ENCODE measurements at regions of chr12 and their contacts with region 1.

Region 1: DNA sequence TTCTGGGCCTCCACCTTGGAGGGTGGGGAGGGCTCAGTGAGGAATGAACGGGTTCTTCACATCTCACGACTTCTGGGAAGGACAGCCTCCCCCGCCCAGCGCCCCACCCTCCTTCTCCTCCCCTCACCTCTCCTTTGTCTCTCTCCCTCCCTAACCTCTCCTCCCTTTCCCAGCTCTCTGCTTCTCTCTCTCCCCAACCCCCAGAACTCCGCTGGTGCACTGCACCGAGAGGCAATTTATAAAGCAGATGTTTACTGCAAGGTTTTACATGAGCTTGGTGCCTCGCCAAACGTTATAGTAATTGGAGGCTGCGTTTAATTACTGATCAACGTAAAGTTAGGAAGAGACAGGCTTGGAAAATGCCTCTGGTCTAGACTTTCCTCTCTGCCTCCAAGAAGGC is 42.9 kb upstream of the FAM222A start:
- DNase-seq: no peak
- H3K4me3 ChIP-seq: no peak overlapping the region
- H3K27ac ChIP-seq: no peak overlapping the region
- H3K4me1 ChIP-seq: no peaks in the 10 kb centered on the region
- H3K27me3 ChIP-seq: no peaks in the 10 kb centered on the region
- CTCF ChIP-seq: no peak
- POLR2A ChIP-seq: no peak

Region 2: GRCh38 chr12:109637348-109637747 is 33.4 kb before region 1 on chr12:
- intact Hi-C with region 1: loop called (anchors 1 kb)
- DNase-seq: no peak
- H3K4me3 ChIP-seq: no peak overlapping the region
- H3K27ac ChIP-seq: no peak overlapping the region
- H3K4me1 ChIP-seq: no peaks in the 10 kb centered on the region
- H3K27me3 ChIP-seq: no peaks in the 10 kb centered on the region
- CTCF ChIP-seq: no peak
- POLR2A ChIP-seq: no peak

Region 3: GRCh38 chr12:109653890-109654289 is 16.8 kb before region 1 on chr12:
- intact Hi-C with region 1: loop called (anchors 1 kb)
- DNase-seq: no peak
- H3K4me3 ChIP-seq: no peak overlapping the region
- H3K27ac ChIP-seq: no peak overlapping the region
- H3K4me1 ChIP-seq: no peaks in the 10 kb centered on the region
- H3K27me3 ChIP-seq: no peaks in the 10 kb centered on the region
- CTCF ChIP-seq: no peak
- POLR2A ChIP-seq: no peak

Measured in breast epithelium (tissue), 4 donors.